PC-3 (cell line): ENCODE measurements at regions of chr11 and their contacts with region 1.

Region 1: GRCh38 chr11:10631426-10632160 is 62.0 kb downstream of the IRAG1 start:
- DNase-seq: no peak
- ATAC-seq: no peak
- H3K4me3 ChIP-seq: no peak overlapping the region
- H3K27ac ChIP-seq: no peak overlapping the region
- H3K4me1 ChIP-seq: 0 out of 2 replicates have a peak, but pooled peaks cover 3% of the 10 kb centered on the region
- H3K27me3 ChIP-seq: no peaks in the 10 kb centered on the region
- CTCF ChIP-seq: no peak

Region 2: DNA sequence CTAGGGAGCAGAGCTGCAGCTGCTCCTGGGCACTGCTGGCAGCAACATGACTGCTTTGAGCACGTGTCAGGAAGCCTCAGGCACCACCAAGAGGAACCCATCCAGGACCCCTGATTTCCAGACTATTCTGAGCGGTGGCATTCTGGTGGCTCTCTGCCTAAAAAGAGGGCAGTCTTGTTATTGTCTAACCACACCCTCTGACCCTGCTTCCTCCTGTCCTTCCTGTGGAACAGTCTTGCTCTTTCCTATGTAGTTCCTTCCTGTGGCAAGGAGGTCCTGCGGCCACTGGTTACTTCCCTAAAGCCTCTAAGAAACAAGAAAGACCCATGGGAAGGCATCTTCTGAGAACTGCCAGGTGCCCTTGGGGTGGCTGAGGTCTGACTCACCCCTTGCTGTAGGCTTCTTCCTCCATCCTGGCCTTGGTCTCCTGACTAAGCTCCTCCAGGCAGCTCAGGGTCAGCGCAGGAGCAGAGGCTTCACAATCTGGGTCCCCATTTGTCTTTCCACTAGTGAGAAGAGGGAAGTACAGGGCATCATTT is 50.0 kb before region 1 on chr11:
- CTCF ChIA-PET with region 1: no interaction called
- POLR2A ChIA-PET with region 1: interaction called, 10 read pairs
- intact Hi-C with region 1: no loop called
- DNase-seq: peak; percentile 43
- ATAC-seq: no peak; the same call in 1 of the 2 replicates
- H3K4me3 ChIP-seq: no peak overlapping the region
- H3K27ac ChIP-seq: no peak overlapping the region
- H3K4me1 ChIP-seq: no peaks in the 10 kb centered on the region
- H3K27me3 ChIP-seq: no peaks in the 10 kb centered on the region
- CTCF ChIP-seq: no peak

Region 3: DNA sequence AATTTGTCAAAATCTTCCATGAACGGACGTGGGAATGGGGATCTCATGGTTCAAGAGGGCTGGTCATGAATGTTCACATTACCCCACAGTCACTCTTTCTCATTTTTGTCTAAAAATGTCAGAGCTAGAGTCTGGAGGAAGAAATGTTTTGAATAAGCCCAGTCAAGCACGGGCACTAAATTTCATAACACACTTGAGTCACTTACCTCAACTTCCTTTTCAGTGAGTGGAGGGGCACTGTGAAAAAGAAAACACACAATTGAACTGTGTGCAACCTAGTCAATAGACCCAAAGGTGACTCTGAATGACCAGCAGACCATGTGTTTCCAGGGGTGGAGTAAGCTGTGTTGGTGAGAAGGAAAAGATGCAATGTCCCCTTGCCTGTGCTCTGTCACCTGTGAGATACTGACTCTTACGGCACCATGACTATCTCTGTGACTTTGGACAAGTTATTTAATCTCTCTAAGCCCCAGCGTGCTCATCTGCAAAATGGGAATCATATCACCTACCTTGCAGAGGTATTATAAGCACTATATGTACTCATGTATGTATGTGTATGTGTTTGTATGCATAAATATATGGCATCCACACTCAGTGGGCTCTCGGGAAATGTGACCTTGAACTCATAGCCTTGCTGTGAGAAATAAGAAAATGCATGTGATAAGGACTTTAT is 24.9 kb before region 1 on chr11:
- CTCF ChIA-PET with region 1: no interaction called
- POLR2A ChIA-PET with region 1: no interaction called
- intact Hi-C with region 1: no loop called
- DNase-seq: peak; percentile 16
- ATAC-seq: no peak
- H3K4me3 ChIP-seq: no peak overlapping the region
- H3K27ac ChIP-seq: no peak overlapping the region
- H3K4me1 ChIP-seq: 0 out of 2 replicates have a peak, but pooled peaks cover 4% of the 10 kb centered on the region
- H3K27me3 ChIP-seq: 0 out of 2 replicates have a peak, but pooled peaks cover under 1% of the 10 kb centered on the region
- CTCF ChIP-seq: no peak

Region 4: DNA sequence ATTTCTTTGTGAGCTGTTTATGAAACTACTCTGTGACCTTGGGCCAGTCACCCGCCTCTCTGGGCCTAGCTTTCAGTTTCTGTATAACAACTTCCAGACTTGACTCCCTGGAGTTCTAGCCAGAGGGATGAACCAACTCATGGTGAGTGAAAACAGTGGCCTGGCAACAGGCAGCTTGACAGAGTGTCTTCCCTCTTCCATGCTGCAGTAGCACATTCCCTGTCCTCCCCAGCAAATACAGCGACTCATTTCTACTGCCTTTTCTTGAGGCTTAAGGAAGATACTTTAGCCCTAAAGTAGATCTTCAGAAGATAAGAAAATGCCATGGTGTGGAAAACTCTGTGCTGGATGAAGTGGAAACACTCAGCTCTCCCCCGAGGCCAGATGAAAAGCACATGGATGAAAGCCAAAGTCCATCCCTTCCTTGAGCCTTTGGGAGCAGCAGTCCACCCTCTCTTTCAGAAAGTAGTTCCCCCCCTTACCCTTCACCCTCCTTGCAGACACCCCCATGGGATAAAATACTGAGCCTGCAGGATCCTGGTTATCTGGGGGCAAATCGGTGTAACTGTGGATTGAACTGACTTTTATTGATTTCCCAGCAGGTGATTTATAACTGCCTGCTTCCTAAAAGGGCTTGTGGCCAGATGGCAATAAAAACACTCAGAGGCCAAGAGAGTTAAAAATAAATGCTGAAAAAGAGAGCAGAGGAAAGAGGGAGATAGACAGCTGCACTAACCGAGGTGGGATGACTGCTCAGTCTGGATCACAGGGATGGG is 37.9 kb after region 1 on chr11:
- CTCF ChIA-PET with region 1: no interaction called
- POLR2A ChIA-PET with region 1: no interaction called
- intact Hi-C with region 1: no loop called
- DNase-seq: peak; percentile 40
- ATAC-seq: no peak
- H3K4me3 ChIP-seq: no peak overlapping the region
- H3K27ac ChIP-seq: no peak overlapping the region
- H3K4me1 ChIP-seq: peaks cover 25% of the 10 kb centered on the region
- H3K27me3 ChIP-seq: no peaks in the 10 kb centered on the region
- CTCF ChIP-seq: no peak

Region 5: DNA sequence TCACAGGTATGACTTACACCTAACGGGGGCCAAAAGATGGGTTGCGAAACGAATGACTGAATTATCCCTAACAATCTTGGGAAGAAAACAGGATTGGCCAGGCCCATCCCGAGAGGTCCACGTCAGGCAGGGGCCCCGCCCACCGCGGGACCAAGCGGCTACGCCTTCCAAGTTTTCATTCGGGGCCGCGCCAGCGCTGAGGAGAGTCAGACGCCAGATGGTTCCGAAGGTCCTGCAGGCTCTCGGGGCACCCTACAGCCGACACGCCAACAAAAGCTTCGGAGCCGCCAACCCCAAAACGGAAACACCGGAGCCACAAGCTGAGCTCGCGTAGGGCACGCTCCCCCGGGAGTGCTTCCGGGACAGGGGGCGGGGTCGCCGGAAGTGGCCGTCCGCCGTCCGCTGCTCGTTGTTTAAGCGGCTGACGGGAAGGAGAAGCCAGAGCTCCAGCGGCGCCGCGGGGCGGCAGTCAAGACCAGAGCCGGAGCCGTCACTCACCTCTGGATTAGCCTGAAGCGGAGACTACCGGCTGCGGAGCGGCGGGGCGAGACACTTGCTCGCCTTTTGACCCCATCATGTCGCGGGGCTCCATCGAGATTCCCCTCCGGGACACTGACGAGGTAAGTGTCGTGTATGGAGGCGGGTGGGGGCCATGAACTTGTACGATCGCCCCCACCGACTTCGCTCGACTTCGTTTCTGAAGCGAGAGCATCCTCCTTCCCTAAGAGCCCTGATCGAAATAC is 119.4 kb after region 1 on chr11 and contains the start of gene CTR9:
- CTCF ChIA-PET with region 1: no interaction called
- POLR2A ChIA-PET with region 1: no interaction called
- intact Hi-C with region 1: no loop called
- DNase-seq: peak; percentile 87
- ATAC-seq: peak; percentile 92
- H3K4me3 ChIP-seq: peak within 1 kb of the TSS; percentile 98
- H3K27ac ChIP-seq: peak within 1 kb of the TSS; percentile 97
- H3K4me1 ChIP-seq: peaks cover 16% of the 10 kb centered on the region
- H3K27me3 ChIP-seq: no peaks in the 10 kb centered on the region
- CTCF ChIP-seq: peak; percentile 22; the same call in 1 of the 2 replicates
- total RNA-seq, gene CTR9: 20.0 and 21.9 TPM in 2 replicates

Region 6: GRCh38 chr11:10770626-10771254 is 139.1 kb after region 1 on chr11:
- CTCF ChIA-PET with region 1: no interaction called
- POLR2A ChIA-PET with region 1: no interaction called
- intact Hi-C with region 1: no loop called
- DNase-seq: peak; percentile 72
- ATAC-seq: peak; percentile 76
- H3K4me3 ChIP-seq: no peak overlapping the region
- H3K27ac ChIP-seq: no peak overlapping the region
- H3K4me1 ChIP-seq: no peaks in the 10 kb centered on the region
- H3K27me3 ChIP-seq: no peaks in the 10 kb centered on the region
- CTCF ChIP-seq: peak; percentile 91